H1 (cell line): ENCODE measurements at regions of chr16 and their contacts with region 1.

Region 1: GRCh38 chr16:12095275-12096156 is 119.0 kb downstream of the SNX29 start:
- DNase-seq: peak; percentile 17 to 81
- H3K4me3 ChIP-seq: no peak overlapping the region
- H3K27ac ChIP-seq: no peak overlapping the region
- H3K4me1 ChIP-seq: peaks cover 0 to 12% (median 4%) of the 10 kb centered on the region in 4 experiments; a peak in 6 of 7 replicates
- H3K27me3 ChIP-seq: peaks cover 0 to 8% (median 3%) of the 10 kb centered on the region in 4 experiments; a peak in 5 of 7 replicates
- CTCF ChIP-seq: peak; percentile 69 to 89 (median 69)
- EP300 ChIP-seq: no peak
- POLR2A ChIP-seq: no peak
- RAD21 ChIP-seq: peak; percentile 89 to 94

Region 2: DNA sequence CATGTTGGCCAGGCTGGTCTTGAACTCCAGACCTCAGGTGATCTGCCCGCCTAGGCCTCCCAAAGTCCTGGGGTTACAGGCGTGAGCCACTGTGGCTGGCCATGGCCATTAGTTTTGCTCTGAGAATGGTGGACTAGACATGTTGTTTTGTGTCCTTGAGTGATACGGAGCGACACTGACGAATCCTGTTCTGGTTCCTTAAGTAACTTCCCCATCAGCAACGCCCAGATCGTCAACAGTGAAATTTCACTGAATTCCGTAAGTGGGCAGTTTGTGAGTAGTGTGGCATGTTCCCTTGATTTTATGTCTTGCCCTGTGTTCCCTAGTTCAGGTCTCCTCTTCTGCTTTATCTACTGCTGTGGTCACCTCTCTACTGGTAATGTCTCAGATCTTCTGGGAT is 51.6 kb before region 1 on chr16:
- CTCF ChIA-PET with region 1: no interaction called
- POLR2A ChIA-PET with region 1: no interaction called
- DNase-seq: no peak
- H3K4me3 ChIP-seq: no peak overlapping the region
- H3K27ac ChIP-seq: no peak overlapping the region
- H3K4me1 ChIP-seq: no peaks in the 10 kb centered on the region
- H3K27me3 ChIP-seq: no peaks in the 10 kb centered on the region
- CTCF ChIP-seq: no peak
- EP300 ChIP-seq: no peak
- POLR2A ChIP-seq: no peak
- RAD21 ChIP-seq: no peak

Region 3: DNA sequence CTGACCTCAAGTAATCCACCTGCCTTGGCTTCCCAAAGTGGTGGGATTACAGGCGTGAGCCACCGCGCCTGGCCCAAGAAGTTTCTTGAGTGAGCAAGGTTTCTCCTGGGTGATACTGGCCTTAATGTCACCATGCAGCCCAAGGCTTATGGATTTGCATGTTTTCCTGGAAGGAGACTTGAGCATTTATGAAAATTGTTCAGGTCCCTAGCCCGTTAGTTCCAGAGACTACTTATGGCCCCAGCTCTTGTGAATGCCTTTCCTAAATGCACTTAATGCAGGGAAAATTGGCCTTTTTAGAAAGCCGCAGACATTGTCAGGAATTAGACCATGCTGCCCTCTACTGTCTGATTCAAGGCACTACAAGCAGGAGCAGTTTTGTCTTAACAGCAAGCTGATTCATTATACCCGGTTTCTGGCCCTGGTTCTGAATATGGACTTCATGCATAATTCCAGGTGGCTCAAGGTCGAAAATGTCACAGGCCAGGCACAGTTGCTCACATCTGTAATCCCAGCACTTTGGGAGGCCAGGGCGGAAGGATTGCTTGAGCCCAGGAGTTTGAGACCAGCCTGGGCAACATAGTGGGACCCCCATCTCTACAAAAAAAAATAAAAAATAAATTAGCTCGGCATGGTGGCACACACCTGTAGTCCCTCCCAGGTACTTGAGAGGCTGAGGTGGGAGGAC is 27.7 kb before region 1 on chr16:
- CTCF ChIA-PET with region 1: no interaction called
- POLR2A ChIA-PET with region 1: no interaction called
- DNase-seq: peak; percentile 25 to 72
- H3K4me3 ChIP-seq: no peak overlapping the region
- H3K27ac ChIP-seq: no peak overlapping the region
- H3K4me1 ChIP-seq: no peaks in the 10 kb centered on the region
- H3K27me3 ChIP-seq: no peaks in the 10 kb centered on the region
- CTCF ChIP-seq: peak in 2 of 3 experiments; percentile 83 to 91; a peak in 3 of 4 replicates
- EP300 ChIP-seq: no peak
- POLR2A ChIP-seq: no peak
- RAD21 ChIP-seq: peak; percentile 93 to 98

Region 4: DNA sequence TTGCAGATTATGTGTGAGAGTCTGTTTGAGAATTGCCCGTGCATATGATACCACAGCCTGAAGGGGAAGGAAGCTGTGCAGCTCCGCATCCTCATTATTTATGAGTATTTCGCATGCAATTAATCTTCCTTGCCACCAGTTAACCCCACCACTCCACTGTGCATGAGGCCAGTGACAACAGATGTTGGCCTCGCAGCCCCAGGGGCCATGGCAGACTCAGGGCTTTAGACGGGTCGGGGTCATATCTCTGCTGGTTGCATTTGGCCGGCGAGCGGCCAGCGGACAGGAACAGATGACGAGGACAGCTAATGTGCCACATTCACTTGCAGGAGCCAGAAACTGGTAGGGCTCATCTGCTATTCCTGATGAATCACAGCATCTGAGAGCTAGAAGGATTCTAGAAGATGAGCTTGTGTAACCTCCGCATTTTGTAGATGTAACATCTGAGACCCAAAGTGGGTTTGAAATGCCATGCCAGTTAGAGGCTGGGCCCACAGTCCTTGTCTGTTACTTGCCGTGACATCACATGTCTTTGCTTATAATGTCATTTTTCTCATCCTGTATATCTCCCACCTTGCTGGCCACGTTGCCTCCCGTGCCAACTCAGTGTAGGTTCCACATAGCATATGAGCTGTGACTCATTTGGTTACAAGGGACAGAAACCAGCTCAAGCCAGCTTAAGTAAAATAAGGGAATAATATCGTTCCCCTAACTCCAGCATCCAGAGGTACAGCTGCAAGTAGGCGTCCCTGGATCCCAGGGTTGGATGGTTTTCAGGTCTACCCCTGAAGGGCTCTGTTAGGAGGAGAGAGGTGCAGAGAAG is 18.2 kb after region 1 on chr16:
- CTCF ChIA-PET with region 1: interaction called, 62 read pairs
- POLR2A ChIA-PET with region 1: no interaction called
- DNase-seq: no peak
- H3K4me3 ChIP-seq: no peak overlapping the region
- H3K27ac ChIP-seq: no peak overlapping the region
- H3K4me1 ChIP-seq: no peaks in the 10 kb centered on the region
- H3K27me3 ChIP-seq: no peaks in the 10 kb centered on the region
- CTCF ChIP-seq: no peak
- EP300 ChIP-seq: no peak
- POLR2A ChIP-seq: no peak
- RAD21 ChIP-seq: no peak

Region 5: GRCh38 chr16:12147681-12148080 is 52.2 kb after region 1 on chr16:
- CTCF ChIA-PET with region 1: interaction called, 12 read pairs
- POLR2A ChIA-PET with region 1: interaction called, 3 read pairs
- DNase-seq: no peak
- H3K4me3 ChIP-seq: no peak overlapping the region; a peak in 2 of 8 replicates
- H3K27ac ChIP-seq: peak overlapping the region; percentile 75
- H3K4me1 ChIP-seq: peaks cover 3 to 15% (median 14%) of the 10 kb centered on the region in 4 experiments; a peak in 5 of 7 replicates
- H3K27me3 ChIP-seq: no peaks in the 10 kb centered on the region
- CTCF ChIP-seq: no peak
- EP300 ChIP-seq: no peak
- POLR2A ChIP-seq: no peak
- RAD21 ChIP-seq: no peak

Region 6: DNA sequence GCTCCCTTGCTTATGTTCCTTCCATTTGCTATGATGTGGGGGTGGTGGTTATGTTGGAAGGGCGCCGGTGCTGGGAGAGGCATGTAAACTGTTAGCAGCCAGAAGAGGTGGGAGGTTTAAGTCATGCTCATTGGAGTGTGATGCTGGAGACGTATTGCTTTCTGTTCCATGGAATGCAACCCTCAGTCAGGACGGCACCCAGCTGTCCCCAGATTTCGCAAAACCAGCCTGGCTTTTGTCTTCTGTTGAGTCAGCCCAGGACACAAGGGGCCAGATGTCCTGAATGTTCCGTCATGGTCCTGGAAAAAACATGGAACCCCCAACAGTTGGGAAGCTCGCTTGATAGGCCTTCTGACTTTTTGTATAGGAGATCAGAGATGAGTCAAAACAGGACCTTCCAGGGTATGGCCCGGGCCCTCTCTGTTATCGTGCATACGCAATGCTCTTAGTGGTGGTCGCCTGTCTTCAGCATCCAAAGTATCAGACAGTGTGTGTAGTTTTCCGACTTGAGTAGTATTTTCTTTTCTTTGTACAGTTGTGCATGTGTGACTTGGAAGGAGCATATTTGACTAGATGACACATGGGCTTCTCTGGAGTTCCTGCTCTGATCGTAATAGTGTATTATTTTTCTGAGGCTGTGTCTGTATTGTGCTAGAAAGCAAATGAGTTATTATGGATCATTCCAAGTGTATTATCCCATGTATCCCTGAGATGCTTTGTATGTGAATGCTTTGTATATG is 82.9 kb after region 1 on chr16:
- CTCF ChIA-PET with region 1: interaction called, 14 read pairs
- POLR2A ChIA-PET with region 1: no interaction called
- DNase-seq: no peak
- H3K4me3 ChIP-seq: no peak overlapping the region
- H3K27ac ChIP-seq: no peak overlapping the region
- H3K4me1 ChIP-seq: peaks cover 2 to 9% (median 6%) of the 10 kb centered on the region in 4 experiments; a peak in 4 of 7 replicates
- H3K27me3 ChIP-seq: no peaks in the 10 kb centered on the region
- CTCF ChIP-seq: no peak
- EP300 ChIP-seq: no peak
- POLR2A ChIP-seq: no peak
- RAD21 ChIP-seq: no peak

Region 7: GRCh38 chr16:12215277-12216105 is 120.0 kb after region 1 on chr16:
- CTCF ChIA-PET with region 1: interaction called, 71 read pairs
- POLR2A ChIA-PET with region 1: no interaction called
- DNase-seq: peak; percentile 27 to 67
- H3K4me3 ChIP-seq: no peak overlapping the region
- H3K27ac ChIP-seq: no peak overlapping the region
- H3K4me1 ChIP-seq: peaks cover 4 to 13% (median 9%) of the 10 kb centered on the region in 4 experiments; a peak in 6 of 7 replicates
- H3K27me3 ChIP-seq: no peaks in the 10 kb centered on the region
- CTCF ChIP-seq: peak; percentile 78 to 90 (median 87)
- EP300 ChIP-seq: no peak
- POLR2A ChIP-seq: no peak
- RAD21 ChIP-seq: peak; percentile 86 to 88

Region 8: GRCh38 chr16:12257926-12258561 is 162.5 kb after region 1 on chr16:
- CTCF ChIA-PET with region 1: interaction called, 59 read pairs
- POLR2A ChIA-PET with region 1: no interaction called
- DNase-seq: no peak
- H3K4me3 ChIP-seq: no peak overlapping the region
- H3K27ac ChIP-seq: no peak overlapping the region
- H3K4me1 ChIP-seq: no peaks in the 10 kb centered on the region
- H3K27me3 ChIP-seq: no peaks in the 10 kb centered on the region
- CTCF ChIP-seq: peak; percentile 36 to 47 (median 43)
- EP300 ChIP-seq: no peak
- POLR2A ChIP-seq: no peak
- RAD21 ChIP-seq: peak; percentile 40 to 51